Endothelial cell of umbilical vein (primary cell): ENCODE measurements at regions of chr3 and their contacts with region 1.

Region 1: GRCh38 chr3:174949526-174949925 is 90.4 kb downstream of the NAALADL2 start:
- DNase-seq: peak; percentile 94
- H3K4me3 ChIP-seq: no peak overlapping the region
- H3K27ac ChIP-seq: peak overlapping the region; percentile 85
- H3K4me1 ChIP-seq: peaks cover 28% of the 10 kb centered on the region
- H3K27me3 ChIP-seq: no peaks in the 10 kb centered on the region
- CTCF ChIP-seq: no peak
- POLR2A ChIP-seq: no peak

Region 2: DNA sequence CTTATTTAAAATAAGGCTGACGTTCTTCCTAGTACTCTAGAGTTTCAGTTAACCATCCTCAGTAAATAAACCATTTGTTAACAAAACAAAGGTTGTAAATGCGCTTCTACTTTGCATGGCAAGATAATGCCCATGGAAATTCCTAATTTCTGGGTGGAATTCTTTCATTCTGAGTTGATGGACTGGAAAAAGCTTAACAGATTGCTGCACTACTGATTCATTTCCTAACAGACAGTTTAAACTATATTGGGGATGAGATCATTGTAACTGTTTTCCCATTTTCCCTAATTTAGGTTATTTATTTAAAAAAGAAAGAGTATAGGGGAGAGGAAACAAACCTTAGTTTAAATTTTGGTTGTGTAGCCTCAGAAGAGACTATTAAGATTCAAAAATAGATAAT is 1209.8 kb before region 1 on chr3:
- CTCF ChIA-PET with region 1: no interaction called
- POLR2A ChIA-PET with region 1: no interaction called
- dilution Hi-C with region 1: no loop called
- intact Hi-C with region 1: loop called (anchors 2 kb)
- DNase-seq: peak; percentile 83
- H3K4me3 ChIP-seq: no peak overlapping the region
- H3K27ac ChIP-seq: peak overlapping the region; percentile 96
- H3K4me1 ChIP-seq: peaks cover 64% of the 10 kb centered on the region
- H3K27me3 ChIP-seq: no peaks in the 10 kb centered on the region
- CTCF ChIP-seq: no peak
- POLR2A ChIP-seq: no peak

Region 3: GRCh38 chr3:174440741-174441587 is 508.6 kb before region 1 on chr3:
- CTCF ChIA-PET with region 1: no interaction called
- POLR2A ChIA-PET with region 1: no interaction called
- dilution Hi-C with region 1: no loop called
- intact Hi-C with region 1: loop called (anchors 1 kb)
- DNase-seq: peak; percentile 90
- H3K4me3 ChIP-seq: peak overlapping the region; percentile 74 to 91 (median 78)
- H3K27ac ChIP-seq: peak overlapping the region; percentile 90
- H3K4me1 ChIP-seq: peaks cover 21% of the 10 kb centered on the region
- H3K27me3 ChIP-seq: no peaks in the 10 kb centered on the region
- CTCF ChIP-seq: no peak
- POLR2A ChIP-seq: peak; percentile 39